ENCODE measurements at regions of chr15 and their contacts with region 1.

Region 1: GRCh38 chr15:66700802-66701421 is 1.1 kb upstream of the SMAD6 start:
- H3K4me3 ChIP-seq: peak overlapping the region; percentile 57
- H3K27ac ChIP-seq: peak overlapping the region; percentile 96
- H3K4me1 ChIP-seq: peaks cover 16% of the 10 kb centered on the region
- CTCF ChIP-seq: no peak

Region 2: GRCh38 chr15:66685638-66686150 is 15.2 kb before region 1 on chr15:
- CTCF ChIA-PET with region 1: interaction called, 32 read pairs
- POLR2A ChIA-PET with region 1: interaction called, 5 read pairs
- H3K4me3 ChIP-seq: no peak overlapping the region
- H3K27ac ChIP-seq: no peak overlapping the region
- H3K4me1 ChIP-seq: no peaks in the 10 kb centered on the region
- CTCF ChIP-seq: no peak

Region 3: DNA sequence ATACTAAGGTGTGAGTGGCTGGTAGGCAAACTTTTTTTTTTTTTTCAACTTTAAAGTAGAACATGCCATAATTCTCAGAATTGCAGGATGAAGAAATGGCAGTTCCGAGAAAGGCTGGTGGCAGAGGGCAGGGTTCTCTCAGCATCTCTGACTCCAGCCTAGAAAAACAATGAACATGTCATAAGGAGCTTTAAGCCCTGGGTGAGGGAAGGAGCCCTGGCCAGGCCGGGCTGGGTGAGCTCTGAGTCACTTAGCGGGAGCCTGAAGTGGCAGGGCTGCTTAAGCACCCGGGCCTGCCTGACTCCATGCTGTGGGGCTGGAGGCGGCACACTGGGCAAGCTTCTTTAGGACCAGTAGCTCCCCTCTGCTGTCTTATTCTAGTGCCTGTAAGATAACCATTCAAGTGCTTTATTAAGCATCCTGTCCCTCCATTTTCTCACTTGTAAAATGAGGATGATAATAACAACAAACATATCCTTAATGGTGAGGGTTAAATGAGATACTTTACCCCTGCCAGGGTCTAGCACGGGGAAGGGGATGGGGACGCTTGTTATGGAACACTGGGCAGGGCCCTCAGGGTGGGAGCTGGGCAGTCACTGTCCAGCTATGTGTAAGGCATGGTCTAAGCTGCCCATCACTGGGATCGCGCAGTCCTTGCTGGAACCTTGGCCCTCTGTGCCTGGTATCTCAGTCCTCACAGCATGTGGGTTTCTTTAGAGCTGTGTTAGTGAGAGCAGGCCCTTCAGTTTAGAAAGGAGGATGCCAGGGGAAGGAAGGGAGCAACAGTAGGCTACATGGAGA is 19.5 kb after region 1 on chr15:
- CTCF ChIA-PET with region 1: interaction called, 6 read pairs
- POLR2A ChIA-PET with region 1: interaction called, 10 read pairs
- H3K4me3 ChIP-seq: no peak overlapping the region
- H3K27ac ChIP-seq: no peak overlapping the region
- H3K4me1 ChIP-seq: no peaks in the 10 kb centered on the region
- CTCF ChIP-seq: no peak

Region 4: DNA sequence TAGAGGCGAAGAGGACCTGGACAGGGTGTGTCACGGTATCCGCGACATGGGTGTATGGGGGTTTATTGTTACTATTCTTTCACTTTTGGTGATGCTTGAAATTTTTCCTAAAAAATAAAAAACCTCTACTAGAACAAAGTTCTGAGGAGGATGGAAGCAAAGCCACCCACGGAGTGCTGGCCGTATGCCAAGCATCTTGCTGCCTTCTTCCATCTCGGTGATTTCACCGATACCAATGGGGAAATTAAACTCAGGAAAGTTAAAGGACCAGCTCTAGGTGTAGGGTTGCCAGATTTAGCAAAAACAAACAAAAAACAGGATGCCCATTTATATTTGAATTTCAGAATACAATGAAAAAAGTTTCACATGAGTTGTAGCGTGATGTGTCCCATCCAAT is 35.0 kb after region 1 on chr15:
- CTCF ChIA-PET with region 1: no interaction called
- POLR2A ChIA-PET with region 1: no interaction called
- H3K4me3 ChIP-seq: no peak overlapping the region
- H3K27ac ChIP-seq: no peak overlapping the region
- H3K4me1 ChIP-seq: peaks cover 15% of the 10 kb centered on the region
- CTCF ChIP-seq: no peak

Region 5: GRCh38 chr15:66765478-66766281 is 64.8 kb after region 1 on chr15:
- CTCF ChIA-PET with region 1: interaction called, 63 read pairs
- POLR2A ChIA-PET with region 1: interaction called, 11 read pairs
- H3K4me3 ChIP-seq: peak overlapping the region; percentile 3; the same call in 1 of the 2 replicates
- H3K27ac ChIP-seq: no peak overlapping the region
- H3K4me1 ChIP-seq: peaks cover 38% of the 10 kb centered on the region
- CTCF ChIP-seq: no peak

Region 6: GRCh38 chr15:66774001-66774814 is 73.3 kb after region 1 on chr15:
- CTCF ChIA-PET with region 1: interaction called, 63 read pairs
- POLR2A ChIA-PET with region 1: interaction called, 6 read pairs
- H3K4me3 ChIP-seq: no peak overlapping the region
- H3K27ac ChIP-seq: no peak overlapping the region
- H3K4me1 ChIP-seq: peaks cover 23% of the 10 kb centered on the region
- CTCF ChIP-seq: peak; percentile 99

Region 7: GRCh38 chr15:66815322-66815721 is 114.4 kb after region 1 on chr15:
- CTCF ChIA-PET with region 1: no interaction called
- POLR2A ChIA-PET with region 1: no interaction called
- H3K4me3 ChIP-seq: no peak overlapping the region
- H3K27ac ChIP-seq: no peak overlapping the region
- H3K4me1 ChIP-seq: no peaks in the 10 kb centered on the region
- CTCF ChIP-seq: no peak

Measured in HEK293 (cell line).